ENCODE measurements at regions of chr4 and their contacts with region 1.

Region 1: DNA sequence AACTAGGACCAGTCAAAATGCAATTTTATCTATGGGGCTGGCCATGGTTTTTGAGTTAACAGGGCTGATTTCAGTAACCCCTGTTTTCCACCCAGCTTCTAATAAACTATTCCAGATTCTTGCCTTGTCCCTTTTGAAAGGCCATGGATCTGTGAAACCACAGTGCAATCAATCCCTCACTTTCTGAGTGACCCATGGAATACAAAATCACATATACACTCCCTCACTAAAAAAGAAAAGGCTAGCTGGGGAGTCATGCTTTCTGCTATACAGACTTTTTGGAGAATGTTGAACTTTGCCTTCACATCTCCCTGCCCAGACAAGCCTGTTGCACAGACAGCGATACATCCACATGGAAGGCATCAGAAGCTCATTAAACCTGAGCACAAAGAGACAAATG is 47.9 kb downstream of the MAD2L1 start:
- DNase-seq: no peak
- H3K4me3 ChIP-seq: no peak overlapping the region
- H3K27ac ChIP-seq: no peak overlapping the region
- H3K27me3 ChIP-seq: no peaks in the 10 kb centered on the region
- CTCF ChIP-seq: no peak

Region 2: GRCh38 chr4:119955256-119955655 is 63.5 kb before region 1 on chr4:
- CTCF ChIA-PET with region 1: no interaction called
- POLR2A ChIA-PET with region 1: no interaction called
- DNase-seq: no peak
- H3K4me3 ChIP-seq: no peak overlapping the region
- H3K27ac ChIP-seq: no peak overlapping the region
- H3K27me3 ChIP-seq: no peaks in the 10 kb centered on the region
- CTCF ChIP-seq: no peak

Region 3: GRCh38 chr4:120000591-120001296 is 18.0 kb before region 1 on chr4:
- CTCF ChIA-PET with region 1: interaction called, 10 read pairs
- POLR2A ChIA-PET with region 1: no interaction called
- DNase-seq: no peak
- H3K4me3 ChIP-seq: no peak overlapping the region
- H3K27ac ChIP-seq: no peak overlapping the region
- H3K27me3 ChIP-seq: no peaks in the 10 kb centered on the region
- CTCF ChIP-seq: no peak

Region 4: GRCh38 chr4:120066517-120067340 is 47.9 kb after region 1 on chr4 and contains the start of gene MAD2L1:
- CTCF ChIA-PET with region 1: no interaction called
- POLR2A ChIA-PET with region 1: no interaction called
- DNase-seq: peak; percentile 95
- H3K4me3 ChIP-seq: peak within 1 kb of the TSS; percentile 78
- H3K27ac ChIP-seq: peak within 1 kb of the TSS; percentile 91
- H3K27me3 ChIP-seq: no peaks in the 10 kb centered on the region
- CTCF ChIP-seq: no peak
- polyA plus RNA-seq, gene MAD2L1: 11.4 and 18.6 TPM in 2 replicates

Measured in AG04450 (cell line).